H1 (cell line): ENCODE measurements at regions of chr12 and their contacts with region 1.

Region 1: DNA sequence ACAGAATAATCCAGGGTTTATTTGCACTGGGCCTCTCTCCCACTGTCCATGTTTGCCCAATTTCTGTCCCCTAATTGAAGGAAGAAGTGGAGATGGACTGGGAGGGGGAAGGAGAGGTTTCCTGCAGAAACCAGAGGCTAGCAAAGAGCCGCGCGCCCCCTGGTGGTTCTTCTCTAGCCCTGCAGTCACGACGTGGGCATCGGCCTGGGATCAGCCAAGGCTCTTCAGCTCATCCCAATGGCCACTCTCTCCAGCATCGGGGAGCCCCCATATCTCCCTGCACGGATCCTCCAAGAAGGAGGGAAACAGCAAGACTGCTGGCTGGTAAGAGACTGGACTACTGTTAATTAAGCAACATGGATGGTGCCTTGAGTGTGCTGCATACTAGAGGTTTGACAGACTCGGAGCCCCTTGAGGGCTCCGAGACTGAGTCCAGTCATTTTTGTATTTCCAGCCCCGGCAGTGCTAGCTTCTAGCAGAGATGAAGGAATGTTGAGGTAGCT is 18.7 kb downstream of the ZBTB39 start:
- DNase-seq: peak; percentile 72 to 94
- H3K4me3 ChIP-seq: peak overlapping the region in 1 of 4 experiments; percentile 15; a peak in 1 of 8 replicates
- H3K27ac ChIP-seq: no peak overlapping the region
- H3K4me1 ChIP-seq: peaks cover 0 to 3% (median under 1%) of the 10 kb centered on the region in 4 experiments; a peak in 2 of 7 replicates
- H3K27me3 ChIP-seq: no peaks in the 10 kb centered on the region
- CTCF ChIP-seq: peak; percentile 92 to 97 (median 96)
- EP300 ChIP-seq: no peak
- POLR2A ChIP-seq: no peak
- RAD21 ChIP-seq: peak; percentile 95

Region 2: DNA sequence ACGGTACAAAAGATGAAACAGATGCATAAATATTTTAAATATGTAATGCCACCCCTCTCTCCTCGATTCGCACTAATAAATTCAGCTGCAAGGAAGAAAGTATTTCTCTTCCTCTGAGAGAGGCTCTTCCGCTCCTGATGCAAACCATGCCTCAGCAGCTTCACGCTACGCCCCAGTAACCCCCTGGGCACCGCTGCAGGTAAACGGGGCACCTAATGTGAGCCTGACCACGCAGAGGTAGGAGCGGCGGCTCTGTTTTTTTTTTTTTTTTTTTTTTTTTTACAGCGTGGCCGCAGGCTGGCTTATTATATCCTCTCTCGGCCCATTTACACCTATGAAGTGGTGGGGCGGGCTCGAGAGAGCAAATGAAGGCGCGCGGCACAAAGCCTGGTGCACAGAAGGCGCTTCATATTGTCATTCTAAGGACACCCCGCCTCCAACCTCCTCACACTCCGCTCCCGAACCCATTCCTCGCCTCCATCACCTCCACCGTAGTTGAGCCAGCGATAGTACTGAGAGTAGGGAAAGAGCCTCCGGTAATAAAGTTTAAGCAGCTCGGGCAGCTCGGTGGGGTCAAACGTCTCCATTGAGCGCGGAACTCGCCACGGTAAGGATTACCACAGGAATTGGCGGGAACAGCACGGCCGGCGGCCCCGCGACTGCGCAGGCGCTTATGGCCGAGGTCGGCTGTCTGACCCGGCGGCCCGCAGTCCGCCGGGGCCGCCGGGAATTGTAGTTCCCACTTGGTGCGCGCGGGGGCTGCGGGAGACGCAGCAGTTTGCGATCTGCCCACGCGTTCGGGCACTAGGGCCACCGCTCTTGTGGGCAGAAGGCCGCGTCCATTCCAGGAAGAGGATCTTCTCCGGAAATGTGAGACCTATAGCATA is 235.6 kb before region 1 on chr12 and contains the start of gene PRIM1:
- CTCF ChIA-PET with region 1: interaction called, 38 read pairs
- POLR2A ChIA-PET with region 1: interaction called, 3 read pairs
- DNase-seq: peak; percentile 64 to 94
- H3K4me3 ChIP-seq: peak within 1 kb of the TSS; percentile 70 to 95 (median 90)
- H3K27ac ChIP-seq: peak within 1 kb of the TSS; percentile 98
- H3K4me1 ChIP-seq: peaks cover 0 to 4% (median 0%) of the 10 kb centered on the region in 4 experiments; a peak in 2 of 7 replicates
- H3K27me3 ChIP-seq: no peaks in the 10 kb centered on the region
- CTCF ChIP-seq: no peak
- EP300 ChIP-seq: no peak
- POLR2A ChIP-seq: peak in 1 of 2 experiments; percentile 95; a peak in 2 of 3 replicates
- RAD21 ChIP-seq: no peak
- total RNA-seq, gene PRIM1: 52.4 and 57.9 TPM in 2 replicates

Region 3: GRCh38 chr12:56766535-56766934 is 221.1 kb before region 1 on chr12:
- CTCF ChIA-PET with region 1: interaction called, 40 read pairs
- POLR2A ChIA-PET with region 1: no interaction called
- DNase-seq: no peak
- H3K4me3 ChIP-seq: no peak overlapping the region
- H3K27ac ChIP-seq: no peak overlapping the region
- H3K4me1 ChIP-seq: peaks cover 0 to 7% (median 2%) of the 10 kb centered on the region in 4 experiments; a peak in 2 of 7 replicates
- H3K27me3 ChIP-seq: no peaks in the 10 kb centered on the region
- CTCF ChIP-seq: no peak
- EP300 ChIP-seq: no peak
- POLR2A ChIP-seq: no peak
- RAD21 ChIP-seq: no peak

Region 4: DNA sequence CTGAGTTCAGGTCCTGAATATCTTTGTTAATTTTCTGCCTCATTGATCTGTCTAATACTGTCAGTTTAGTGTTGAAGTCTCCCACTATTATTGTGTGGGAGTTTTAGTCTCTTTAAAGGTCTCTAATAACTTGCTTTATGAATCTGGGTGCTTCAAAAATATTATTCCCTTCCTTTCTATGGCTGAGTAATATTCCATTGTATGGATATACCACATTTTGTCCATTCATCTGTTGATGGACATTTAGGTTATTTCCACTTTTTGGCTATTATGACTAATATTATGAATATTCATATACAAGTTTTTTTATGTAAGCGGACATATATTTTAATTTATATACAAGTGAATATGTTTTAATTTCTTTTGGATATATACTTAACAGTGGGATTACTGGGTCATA is 136.1 kb before region 1 on chr12:
- CTCF ChIA-PET with region 1: interaction called, 11 read pairs
- POLR2A ChIA-PET with region 1: no interaction called
- DNase-seq: no peak
- H3K4me3 ChIP-seq: no peak overlapping the region
- H3K27ac ChIP-seq: no peak overlapping the region
- H3K4me1 ChIP-seq: no peaks in the 10 kb centered on the region
- H3K27me3 ChIP-seq: no peaks in the 10 kb centered on the region
- CTCF ChIP-seq: no peak
- EP300 ChIP-seq: no peak
- POLR2A ChIP-seq: no peak
- RAD21 ChIP-seq: no peak

Region 5: DNA sequence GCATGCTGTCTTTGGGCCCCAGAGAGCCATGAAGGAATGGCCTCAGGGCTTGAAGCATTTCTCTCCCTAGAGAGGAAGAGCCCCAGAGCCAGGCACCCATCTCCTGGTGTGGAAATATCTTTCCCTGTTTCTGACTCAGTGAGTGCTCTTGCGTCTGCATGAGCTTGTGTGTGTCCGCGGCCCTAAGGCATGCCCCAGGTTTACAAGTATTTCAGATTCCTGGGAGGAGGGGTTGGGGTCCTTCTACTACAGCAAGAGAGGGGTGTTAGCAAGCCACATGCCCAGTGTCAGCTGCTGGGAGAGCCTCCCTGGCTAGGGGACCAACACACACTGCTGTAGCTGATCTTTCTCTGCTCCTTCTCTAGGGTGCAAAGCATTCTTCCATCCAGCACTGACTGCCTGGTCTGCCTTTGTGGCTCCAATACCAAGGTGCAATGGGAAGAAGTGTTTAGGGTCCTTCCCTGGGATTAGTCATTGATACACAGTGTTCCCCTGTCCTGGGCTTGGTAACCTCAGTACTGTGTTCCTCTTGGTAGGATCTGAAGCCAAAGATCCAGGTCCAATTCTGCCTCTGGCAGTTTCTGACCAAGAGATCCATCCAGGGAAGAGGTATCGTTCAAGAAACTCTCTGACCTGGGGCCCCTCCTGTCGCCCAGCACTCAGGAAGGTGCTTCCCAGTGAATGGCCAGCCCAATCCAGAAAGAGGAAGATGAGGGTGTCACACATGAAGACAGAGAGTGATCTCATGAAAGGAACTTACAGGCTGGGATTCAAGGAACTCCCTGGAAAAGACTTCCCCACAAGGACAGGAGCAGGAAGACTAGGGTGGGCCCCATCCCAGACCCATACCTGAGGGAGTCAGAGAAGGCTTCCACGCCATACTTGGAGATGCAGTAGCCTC is 33.3 kb before region 1 on chr12:
- CTCF ChIA-PET with region 1: interaction called, 10 read pairs
- POLR2A ChIA-PET with region 1: no interaction called
- DNase-seq: no peak
- H3K4me3 ChIP-seq: no peak overlapping the region
- H3K27ac ChIP-seq: no peak overlapping the region
- H3K4me1 ChIP-seq: no peaks in the 10 kb centered on the region
- H3K27me3 ChIP-seq: no peaks in the 10 kb centered on the region
- CTCF ChIP-seq: no peak
- EP300 ChIP-seq: no peak
- POLR2A ChIP-seq: no peak
- RAD21 ChIP-seq: no peak

Region 6: GRCh38 chr12:57012600-57013465 is 25.2 kb after region 1 on chr12:
- CTCF ChIA-PET with region 1: interaction called, 15 read pairs
- POLR2A ChIA-PET with region 1: no interaction called
- DNase-seq: no peak
- H3K4me3 ChIP-seq: no peak overlapping the region
- H3K27ac ChIP-seq: no peak overlapping the region
- H3K4me1 ChIP-seq: peaks cover 6 to 20% (median 15%) of the 10 kb centered on the region in 4 experiments
- H3K27me3 ChIP-seq: no peaks in the 10 kb centered on the region
- CTCF ChIP-seq: peak; percentile 41 to 59 (median 46)
- EP300 ChIP-seq: no peak
- POLR2A ChIP-seq: no peak
- RAD21 ChIP-seq: peak; percentile 60 to 62